WTC11 (cell line): ENCODE measurements at regions of chr11 and their contacts with region 1.

Region 1: DNA sequence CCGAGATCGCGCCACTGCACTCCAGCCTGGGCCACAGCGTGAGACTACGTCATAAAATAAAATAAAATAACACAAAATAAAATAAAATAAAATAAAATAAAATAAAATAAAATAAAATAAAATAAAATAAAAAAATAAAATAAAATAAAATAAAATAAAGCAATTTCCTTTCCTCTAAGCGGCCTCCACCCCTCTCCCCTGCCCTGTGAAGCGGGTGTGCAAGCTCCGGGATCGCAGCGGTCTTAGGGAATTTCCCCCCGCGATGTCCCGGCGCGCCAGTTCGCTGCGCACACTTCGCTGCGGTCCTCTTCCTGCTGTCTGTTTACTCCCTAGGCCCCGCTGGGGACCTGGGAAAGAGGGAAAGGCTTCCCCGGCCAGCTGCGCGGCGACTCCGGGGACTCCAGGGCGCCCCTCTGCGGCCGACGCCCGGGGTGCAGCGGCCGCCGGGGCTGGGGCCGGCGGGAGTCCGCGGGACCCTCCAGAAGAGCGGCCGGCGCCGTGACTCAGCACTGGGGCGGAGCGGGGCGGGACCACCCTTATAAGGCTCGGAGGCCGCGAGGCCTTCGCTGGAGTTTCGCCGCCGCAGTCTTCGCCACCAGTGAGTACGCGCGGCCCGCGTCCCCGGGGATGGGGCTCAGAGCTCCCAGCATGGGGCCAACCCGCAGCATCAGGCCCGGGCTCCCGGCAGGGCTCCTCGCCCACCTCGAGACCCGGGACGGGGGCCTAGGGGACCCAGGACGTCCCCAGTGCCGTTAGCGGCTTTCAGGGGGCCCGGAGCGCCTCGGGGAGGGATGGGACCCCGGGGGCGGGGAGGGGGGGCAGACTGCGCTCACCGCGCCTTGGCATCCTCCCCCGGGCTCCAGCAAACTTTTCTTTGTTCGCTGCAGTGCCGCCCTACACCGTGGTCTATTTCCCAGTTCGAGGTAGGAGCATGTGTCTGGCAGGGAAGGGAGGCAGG is at the start of gene GSTP1:
- DNase-seq: peak; percentile 86
- ATAC-seq: peak; percentile 86
- H3K4me3 Mint-ChIP-seq: peak within 1 kb of the TSS; percentile 85
- H3K27ac Mint-ChIP-seq: peak within 1 kb of the TSS; percentile 100
- H3K4me1 Mint-ChIP-seq: peaks cover 53% of the 10 kb centered on the region
- H3K27me3 Mint-ChIP-seq: no peaks in the 10 kb centered on the region; the same call in 1 of the 2 replicates
- CTCF ChIP-seq: peak; percentile 69
- total RNA-seq, gene GSTP1: 1,404 to 1,452 TPM (median 1,412 TPM) in 3 replicates

Region 2: GRCh38 chr11:67572747-67573419 is 10.6 kb before region 1 on chr11:
- CTCF ChIA-PET with region 1: interaction called, 22 read pairs
- POLR2A ChIA-PET with region 1: no interaction called
- DNase-seq: peak; percentile 71
- ATAC-seq: peak; percentile 60
- H3K4me3 Mint-ChIP-seq: no peak overlapping the region
- H3K27ac Mint-ChIP-seq: no peak overlapping the region
- H3K4me1 Mint-ChIP-seq: no peaks in the 10 kb centered on the region
- H3K27me3 Mint-ChIP-seq: peaks cover 30% of the 10 kb centered on the region
- CTCF ChIP-seq: 0 out of 2 replicates have a peak, but pooled peaks have one; percentile 39